Heart left ventricle (tissue), 16 donors: ENCODE measurements at regions of chr2 and their contacts with region 1.

Region 1: GRCh38 chr2:42944779-42945415 is 152.5 kb upstream of the HAAO start:
- DNase-seq: no peak
- ATAC-seq: no peak
- H3K4me3 ChIP-seq: no peak overlapping the region
- H3K27ac ChIP-seq: peak overlapping the region in 1 of 12 donors; percentile 6
- H3K4me1 ChIP-seq: peaks cover 0 to 32% (median 16%) of the 10 kb centered on the region in 12 donors
- H3K27me3 ChIP-seq: no peaks in the 10 kb centered on the region
- CTCF ChIP-seq: no peak
- POLR2A ChIP-seq: no peak

Region 2: DNA sequence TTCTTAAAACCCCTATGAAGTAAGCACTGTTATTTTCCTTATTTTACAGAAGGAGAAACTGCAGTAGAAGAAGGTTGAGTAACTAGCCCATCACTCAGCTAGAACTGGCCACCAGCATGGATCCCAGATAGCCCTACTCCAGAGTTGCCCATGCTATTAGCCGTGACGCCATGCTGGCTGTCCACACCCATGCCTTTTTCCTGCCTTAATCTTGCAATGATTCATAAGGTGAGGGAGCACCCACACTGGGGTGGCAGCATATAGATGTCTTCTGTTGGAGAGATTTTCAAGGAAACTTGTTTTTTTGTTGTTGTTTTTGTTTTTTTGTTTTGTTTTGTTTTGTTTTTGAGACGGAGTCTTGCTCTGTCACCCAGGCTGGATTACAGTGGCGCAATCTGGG is 51.6 kb after region 1 on chr2:
- intact Hi-C with region 1: no loop called
- DNase-seq: peak in 1 of 5 donors; percentile 4
- ATAC-seq: no peak
- H3K4me3 ChIP-seq: no peak overlapping the region
- H3K27ac ChIP-seq: no peak overlapping the region
- H3K4me1 ChIP-seq: peaks cover 0 to 9% (median 0%) of the 10 kb centered on the region in 12 donors
- H3K27me3 ChIP-seq: no peaks in the 10 kb centered on the region
- CTCF ChIP-seq: no peak
- POLR2A ChIP-seq: no peak

Region 3: GRCh38 chr2:43537137-43537536 is 592.2 kb after region 1 on chr2:
- intact Hi-C with region 1: loop called in 6 of 10 experiments (anchors 5 to 10 kb)
- DNase-seq: no peak
- ATAC-seq: no peak
- H3K4me3 ChIP-seq: no peak overlapping the region
- H3K27ac ChIP-seq: peak overlapping the region in 1 of 12 donors; percentile 9
- H3K4me1 ChIP-seq: peaks cover 0 to 37% (median 2%) of the 10 kb centered on the region in 12 donors
- H3K27me3 ChIP-seq: no peaks in the 10 kb centered on the region
- CTCF ChIP-seq: no peak
- POLR2A ChIP-seq: no peak

Region 4: DNA sequence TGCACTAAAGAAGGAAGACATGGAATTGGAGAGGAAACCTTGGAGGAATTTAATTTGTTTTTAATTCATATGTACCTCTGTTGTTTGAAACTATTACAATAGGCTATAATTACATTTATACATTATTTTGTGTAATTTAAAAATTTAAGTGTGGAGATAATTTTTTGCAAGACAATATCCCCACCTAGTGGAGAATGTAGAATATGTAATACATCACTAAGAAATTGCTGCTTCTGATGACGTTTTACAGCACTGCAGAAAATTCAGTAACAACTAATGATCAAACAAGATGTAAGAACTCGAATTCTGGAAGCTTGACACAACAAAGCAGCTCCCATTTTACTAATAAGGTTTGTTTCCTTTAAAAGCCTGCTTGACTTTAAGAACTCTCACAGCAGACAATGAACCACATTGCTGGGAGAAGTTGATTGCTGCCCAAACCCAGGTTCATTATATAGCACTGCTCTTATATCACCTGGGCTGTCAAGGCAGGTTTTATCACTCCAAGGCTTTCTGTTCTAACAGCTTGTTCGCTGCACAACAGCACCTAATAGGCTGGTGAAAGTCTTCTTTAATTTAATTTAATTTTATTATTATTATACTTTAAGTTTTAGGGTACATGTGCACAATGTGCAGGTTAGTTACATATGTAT is 597.5 kb after region 1 on chr2:
- intact Hi-C with region 1: loop called in 6 of 10 experiments (anchors 5 to 10 kb)
- DNase-seq: no peak
- ATAC-seq: peak in 1 of 4 donors; percentile 33
- H3K4me3 ChIP-seq: no peak overlapping the region
- H3K27ac ChIP-seq: peak overlapping the region in 1 of 12 donors; percentile 62
- H3K4me1 ChIP-seq: peaks cover 0 to 28% (median 2%) of the 10 kb centered on the region in 12 donors
- H3K27me3 ChIP-seq: no peaks in the 10 kb centered on the region
- CTCF ChIP-seq: peak; percentile 50 to 74 (median 60)
- POLR2A ChIP-seq: no peak